ENCODE measurements at regions of chr6 and their contacts with region 1.

Region 1: GRCh38 chr6:125314019-125314581 is 12.3 kb upstream of the HDDC2 start:
- DNase-seq: peak; percentile 80
- H3K4me3 Mint-ChIP-seq: no peak overlapping the region
- H3K27ac Mint-ChIP-seq: no peak overlapping the region
- H3K4me1 Mint-ChIP-seq: no peaks in the 10 kb centered on the region
- H3K27me3 Mint-ChIP-seq: peaks cover 14% of the 10 kb centered on the region

Region 2: GRCh38 chr6:125749173-125749864 is 435.2 kb after region 1 on chr6 and contains the start of gene HEY2:
- intact Hi-C with region 1: loop called (anchors 1 kb)
- DNase-seq: peak; percentile 96
- H3K4me3 Mint-ChIP-seq: peak within 1 kb of the TSS; percentile 85
- H3K27ac Mint-ChIP-seq: peak within 1 kb of the TSS; percentile 42
- H3K4me1 Mint-ChIP-seq: peaks cover 33% of the 10 kb centered on the region
- H3K27me3 Mint-ChIP-seq: peaks cover 77% of the 10 kb centered on the region
- total RNA-seq, gene HEY2: not detected in 2 replicates

Region 3: GRCh38 chr6:125765944-125766343 is 451.8 kb after region 1 on chr6:
- intact Hi-C with region 1: loop called (anchors 1 kb)
- DNase-seq: no peak
- H3K4me3 Mint-ChIP-seq: no peak overlapping the region
- H3K27ac Mint-ChIP-seq: no peak overlapping the region
- H3K4me1 Mint-ChIP-seq: peaks cover 1% of the 10 kb centered on the region
- H3K27me3 Mint-ChIP-seq: peaks cover 49% of the 10 kb centered on the region

Region 4: GRCh38 chr6:125974214-125974866 is 660.2 kb after region 1 on chr6:
- intact Hi-C with region 1: loop called (anchors 2 kb)
- DNase-seq: no peak
- H3K4me3 Mint-ChIP-seq: no peak overlapping the region
- H3K27ac Mint-ChIP-seq: no peak overlapping the region
- H3K4me1 Mint-ChIP-seq: peaks cover 3% of the 10 kb centered on the region
- H3K27me3 Mint-ChIP-seq: no peaks in the 10 kb centered on the region

Region 5: DNA sequence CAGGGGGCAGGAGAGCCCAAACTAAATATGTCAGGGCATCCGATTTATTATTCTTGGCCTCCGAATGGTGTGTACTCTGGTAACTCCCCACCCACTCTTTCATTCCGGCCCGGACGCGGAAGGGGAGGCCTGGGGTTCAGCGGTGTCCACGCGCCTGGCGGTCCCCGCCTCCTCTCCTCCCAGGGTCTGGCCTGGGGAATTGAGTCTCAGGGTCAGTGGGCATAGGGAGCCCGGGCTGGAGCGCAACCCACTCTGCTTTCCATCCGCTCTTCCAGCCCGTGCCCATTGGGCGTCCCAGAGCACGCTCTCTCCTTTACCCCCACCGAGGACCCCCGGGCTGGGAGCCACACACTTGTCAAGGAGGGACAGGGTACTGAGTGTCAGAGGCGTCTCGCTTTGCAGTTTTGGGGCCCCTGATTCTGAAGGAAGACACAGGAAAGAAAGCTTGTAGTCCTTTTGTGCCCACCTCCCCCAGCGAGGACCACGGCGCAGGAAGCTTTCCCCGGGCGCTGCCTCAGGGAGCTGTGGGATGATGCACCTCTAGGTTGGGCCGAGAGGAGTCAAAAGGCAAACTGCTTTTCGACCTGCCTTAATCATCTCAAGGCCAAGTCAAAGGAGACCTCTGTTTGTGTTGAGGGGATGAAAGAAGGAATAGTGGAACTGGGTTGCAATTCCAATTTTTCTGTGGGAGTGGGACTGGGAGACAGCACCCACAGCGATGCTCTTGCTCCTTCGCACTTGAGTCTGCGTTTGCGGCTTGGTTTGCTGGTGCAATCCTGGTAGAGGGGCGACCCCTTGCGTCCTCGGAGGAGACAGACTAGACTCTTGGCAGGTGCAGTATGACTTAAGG is 1806.9 kb after region 1 on chr6:
- intact Hi-C with region 1: loop called (anchors 10 kb)
- DNase-seq: peak; percentile 91
- H3K4me3 Mint-ChIP-seq: peak overlapping the region; percentile 28
- H3K27ac Mint-ChIP-seq: no peak overlapping the region
- H3K4me1 Mint-ChIP-seq: peaks cover 18% of the 10 kb centered on the region
- H3K27me3 Mint-ChIP-seq: peaks cover 71% of the 10 kb centered on the region

Measured in activated CD4-positive, alpha-beta T cell treated with anti-CD3 and anti-CD28 coated beads, Interleukin-2, amount 10 ng/mL, durations not matched to agents 24 days and 14 days (primary cell).